Activated CD8-positive, alpha-beta T cell treated with anti-CD3 and anti-CD28 coated beads for 36 hours (primary cell): ENCODE measurements at regions of chr15 and their contacts with region 1.

Region 1: GRCh38 chr15:57541805-57542504 is 49.7 kb upstream of the MYZAP start:
- DNase-seq: peak; percentile 54
- ATAC-seq: no peak
- H3K4me3 Mint-ChIP-seq: no peak overlapping the region
- H3K27ac Mint-ChIP-seq: no peak overlapping the region
- H3K4me1 Mint-ChIP-seq: no peaks in the 10 kb centered on the region
- H3K27me3 Mint-ChIP-seq: peaks cover 7% of the 10 kb centered on the region
- CTCF ChIP-seq: peak; percentile 64

Region 2: GRCh38 chr15:57340682-57341259 is 201.2 kb before region 1 on chr15:
- CTCF ChIA-PET with region 1: interaction called, 14 read pairs
- POLR2A ChIA-PET with region 1: no interaction called
- intact Hi-C with region 1: loop called (anchors 5 kb)
- DNase-seq: peak; percentile 47
- ATAC-seq: peak; percentile 42
- H3K4me3 Mint-ChIP-seq: no peak overlapping the region
- H3K27ac Mint-ChIP-seq: no peak overlapping the region
- H3K4me1 Mint-ChIP-seq: no peaks in the 10 kb centered on the region
- H3K27me3 Mint-ChIP-seq: peaks cover 5% of the 10 kb centered on the region
- CTCF ChIP-seq: peak; percentile 86

Region 3: GRCh38 chr15:57427367-57427821 is 114.6 kb before region 1 on chr15:
- CTCF ChIA-PET with region 1: no interaction called
- POLR2A ChIA-PET with region 1: no interaction called
- intact Hi-C with region 1: no loop called
- DNase-seq: no peak
- ATAC-seq: no peak
- H3K4me3 Mint-ChIP-seq: no peak overlapping the region
- H3K27ac Mint-ChIP-seq: no peak overlapping the region
- H3K4me1 Mint-ChIP-seq: no peaks in the 10 kb centered on the region
- H3K27me3 Mint-ChIP-seq: no peaks in the 10 kb centered on the region
- CTCF ChIP-seq: no peak

Region 4: GRCh38 chr15:57485869-57486268 is 56.1 kb before region 1 on chr15:
- CTCF ChIA-PET with region 1: no interaction called
- POLR2A ChIA-PET with region 1: no interaction called
- intact Hi-C with region 1: no loop called
- DNase-seq: no peak
- ATAC-seq: no peak
- H3K4me3 Mint-ChIP-seq: no peak overlapping the region
- H3K27ac Mint-ChIP-seq: no peak overlapping the region
- H3K4me1 Mint-ChIP-seq: no peaks in the 10 kb centered on the region
- H3K27me3 Mint-ChIP-seq: peaks cover 14% of the 10 kb centered on the region
- CTCF ChIP-seq: no peak

Region 5: GRCh38 chr15:57551717-57552677 is 10.0 kb after region 1 on chr15:
- CTCF ChIA-PET with region 1: interaction called, 12 read pairs
- POLR2A ChIA-PET with region 1: interaction called, 3 read pairs
- intact Hi-C with region 1: no loop called
- DNase-seq: no peak
- ATAC-seq: no peak
- H3K4me3 Mint-ChIP-seq: no peak overlapping the region
- H3K27ac Mint-ChIP-seq: no peak overlapping the region
- H3K4me1 Mint-ChIP-seq: no peaks in the 10 kb centered on the region
- H3K27me3 Mint-ChIP-seq: no peaks in the 10 kb centered on the region
- CTCF ChIP-seq: no peak

Region 6: DNA sequence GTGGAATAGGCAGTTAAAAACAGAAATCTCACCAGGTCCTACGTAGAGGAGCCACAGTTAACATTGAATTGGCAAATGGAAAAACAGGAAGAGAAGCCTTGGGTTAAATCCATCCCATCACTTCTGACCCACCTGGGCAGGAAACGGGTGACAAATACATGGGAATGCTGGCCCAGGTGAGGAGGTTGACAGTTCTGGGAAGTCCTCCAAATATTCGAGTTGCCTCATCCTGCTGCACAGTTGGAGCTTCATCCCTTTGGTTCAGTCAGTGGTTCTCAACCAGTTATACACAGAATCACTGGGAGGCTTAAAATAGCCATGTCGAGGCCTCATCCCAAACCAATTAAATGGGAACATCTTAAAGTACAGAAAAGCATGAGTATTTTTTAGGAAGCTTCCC is 55.0 kb after region 1 on chr15:
- CTCF ChIA-PET with region 1: no interaction called
- POLR2A ChIA-PET with region 1: no interaction called
- intact Hi-C with region 1: no loop called
- DNase-seq: no peak
- ATAC-seq: no peak
- H3K4me3 Mint-ChIP-seq: no peak overlapping the region
- H3K27ac Mint-ChIP-seq: no peak overlapping the region
- H3K4me1 Mint-ChIP-seq: no peaks in the 10 kb centered on the region
- H3K27me3 Mint-ChIP-seq: peaks cover 16% of the 10 kb centered on the region
- CTCF ChIP-seq: no peak

Region 7: GRCh38 chr15:57667171-57667849 is 125.4 kb after region 1 on chr15:
- CTCF ChIA-PET with region 1: no interaction called
- POLR2A ChIA-PET with region 1: no interaction called
- intact Hi-C with region 1: no loop called
- DNase-seq: no peak
- ATAC-seq: no peak
- H3K4me3 Mint-ChIP-seq: no peak overlapping the region
- H3K27ac Mint-ChIP-seq: no peak overlapping the region
- H3K4me1 Mint-ChIP-seq: peaks cover 3% of the 10 kb centered on the region
- H3K27me3 Mint-ChIP-seq: peaks cover 11% of the 10 kb centered on the region
- CTCF ChIP-seq: no peak